ENCODE measurements at regions of chr2 and their contacts with region 1.

Region 1: GRCh38 chr2:240819858-240820606 is at the start of gene KIF1A:
- DNase-seq: peak in 1 of 2 experiments; percentile 84
- H3K4me3 ChIP-seq: peak within 1 kb of the TSS; percentile 69 to 100 (median 80)
- H3K27ac ChIP-seq: peak within 1 kb of the TSS; percentile 67; the same call in 1 of the 2 replicates
- H3K4me1 ChIP-seq: peaks cover 0 to 20% (median 16%) of the 10 kb centered on the region in 4 experiments; a peak in 6 of 7 replicates
- H3K27me3 ChIP-seq: peaks cover 0 to 2% (median 0%) of the 10 kb centered on the region in 4 experiments; a peak in 1 of 7 replicates
- CTCF ChIP-seq: no peak
- EP300 ChIP-seq: no peak
- POLR2A ChIP-seq: peak in 1 of 2 experiments; percentile 74; a peak in 2 of 3 replicates
- RAD21 ChIP-seq: no peak
- total RNA-seq, gene KIF1A: 267 and 281 TPM in 2 replicates

Region 2: GRCh38 chr2:240640939-240641338 is 179.1 kb before region 1 on chr2:
- CTCF ChIA-PET with region 1: no interaction called
- POLR2A ChIA-PET with region 1: no interaction called
- DNase-seq: peak; percentile 49 to 84
- H3K4me3 ChIP-seq: no peak overlapping the region
- H3K27ac ChIP-seq: no peak overlapping the region
- H3K4me1 ChIP-seq: no peaks in the 10 kb centered on the region; a peak in 1 of 7 replicates
- H3K27me3 ChIP-seq: peaks cover 0 to 2% (median 0%) of the 10 kb centered on the region in 4 experiments; a peak in 3 of 7 replicates
- CTCF ChIP-seq: peak; percentile 85 to 95 (median 93)
- EP300 ChIP-seq: no peak
- POLR2A ChIP-seq: no peak
- RAD21 ChIP-seq: peak; percentile 61 to 76

Region 3: DNA sequence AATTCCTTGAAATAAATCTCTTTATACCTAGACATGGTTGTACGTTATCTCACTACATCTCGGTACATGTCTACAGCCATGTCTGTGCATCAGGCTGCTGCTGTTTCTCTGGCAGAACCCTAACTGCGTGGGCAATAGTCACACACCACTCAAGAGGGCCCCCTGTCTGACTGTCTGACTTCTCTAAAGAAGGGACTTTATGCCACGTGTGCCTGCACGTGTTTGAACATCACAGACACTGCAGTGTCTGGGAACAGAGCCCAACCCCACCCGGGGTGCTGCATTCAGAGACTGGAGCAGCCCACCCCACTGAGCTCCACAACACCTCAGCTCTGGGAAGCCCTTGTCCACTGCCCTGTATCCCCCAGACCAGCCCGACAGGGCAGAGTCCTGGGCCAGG is 55.0 kb before region 1 on chr2:
- CTCF ChIA-PET with region 1: no interaction called
- POLR2A ChIA-PET with region 1: interaction called, 10 read pairs
- DNase-seq: no peak
- H3K4me3 ChIP-seq: no peak overlapping the region
- H3K27ac ChIP-seq: no peak overlapping the region
- H3K4me1 ChIP-seq: no peaks in the 10 kb centered on the region
- H3K27me3 ChIP-seq: no peaks in the 10 kb centered on the region
- CTCF ChIP-seq: no peak
- EP300 ChIP-seq: no peak
- POLR2A ChIP-seq: no peak
- RAD21 ChIP-seq: no peak

Region 4: GRCh38 chr2:240791821-240792628 is 28.0 kb before region 1 on chr2:
- CTCF ChIA-PET with region 1: interaction called, 3 read pairs
- POLR2A ChIA-PET with region 1: interaction called, 12 read pairs
- DNase-seq: no peak
- H3K4me3 ChIP-seq: no peak overlapping the region
- H3K27ac ChIP-seq: no peak overlapping the region
- H3K4me1 ChIP-seq: peaks cover 0 to 11% (median 8%) of the 10 kb centered on the region in 4 experiments; a peak in 5 of 7 replicates
- H3K27me3 ChIP-seq: no peaks in the 10 kb centered on the region
- CTCF ChIP-seq: no peak
- EP300 ChIP-seq: no peak
- POLR2A ChIP-seq: no peak
- RAD21 ChIP-seq: no peak

Region 5: DNA sequence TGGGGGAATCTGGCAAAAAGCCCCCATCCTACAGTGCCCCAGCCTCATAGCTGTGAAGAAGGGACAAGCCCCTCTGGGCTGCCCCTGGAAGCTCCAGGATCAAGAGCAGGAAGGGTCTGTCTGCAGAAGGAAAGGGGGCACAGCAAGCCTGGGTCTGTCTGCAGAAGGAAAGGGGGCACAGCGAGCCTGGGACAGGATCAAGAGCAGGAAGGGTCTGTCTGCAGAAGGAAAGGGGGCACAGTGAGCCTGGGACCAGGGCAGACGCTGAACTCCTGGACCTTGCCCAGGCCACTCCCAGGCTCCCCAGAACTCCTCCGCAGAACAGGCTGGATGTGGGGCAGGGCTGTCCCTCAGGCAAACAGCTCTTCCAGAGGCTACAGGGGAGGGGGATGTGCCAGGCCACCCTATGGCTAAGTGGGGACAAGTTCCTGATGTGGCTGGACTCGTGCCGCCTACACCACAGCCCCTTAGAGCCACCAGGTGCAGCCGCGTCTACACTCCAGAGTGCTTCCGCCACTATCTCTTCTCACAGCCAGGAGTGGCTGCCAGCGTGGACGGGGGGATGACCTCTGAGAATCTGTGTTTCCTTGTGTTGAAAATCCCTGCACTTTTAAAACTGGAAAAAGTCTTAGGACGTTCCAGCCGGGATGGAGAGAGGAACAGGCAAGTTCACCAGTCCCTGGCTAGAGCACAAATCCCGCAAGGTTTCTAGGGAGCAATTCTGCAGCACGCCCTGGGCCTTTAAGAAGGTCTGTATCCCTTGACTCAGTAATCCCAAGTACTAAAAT is 20.8 kb before region 1 on chr2:
- CTCF ChIA-PET with region 1: interaction called, 3 read pairs
- POLR2A ChIA-PET with region 1: interaction called, 52 read pairs
- DNase-seq: no peak
- H3K4me3 ChIP-seq: no peak overlapping the region
- H3K27ac ChIP-seq: no peak overlapping the region; the same call in 1 of the 2 replicates
- H3K4me1 ChIP-seq: no peaks in the 10 kb centered on the region; a peak in 1 of 7 replicates
- H3K27me3 ChIP-seq: no peaks in the 10 kb centered on the region
- CTCF ChIP-seq: no peak
- EP300 ChIP-seq: no peak
- POLR2A ChIP-seq: no peak
- RAD21 ChIP-seq: no peak

Region 6: DNA sequence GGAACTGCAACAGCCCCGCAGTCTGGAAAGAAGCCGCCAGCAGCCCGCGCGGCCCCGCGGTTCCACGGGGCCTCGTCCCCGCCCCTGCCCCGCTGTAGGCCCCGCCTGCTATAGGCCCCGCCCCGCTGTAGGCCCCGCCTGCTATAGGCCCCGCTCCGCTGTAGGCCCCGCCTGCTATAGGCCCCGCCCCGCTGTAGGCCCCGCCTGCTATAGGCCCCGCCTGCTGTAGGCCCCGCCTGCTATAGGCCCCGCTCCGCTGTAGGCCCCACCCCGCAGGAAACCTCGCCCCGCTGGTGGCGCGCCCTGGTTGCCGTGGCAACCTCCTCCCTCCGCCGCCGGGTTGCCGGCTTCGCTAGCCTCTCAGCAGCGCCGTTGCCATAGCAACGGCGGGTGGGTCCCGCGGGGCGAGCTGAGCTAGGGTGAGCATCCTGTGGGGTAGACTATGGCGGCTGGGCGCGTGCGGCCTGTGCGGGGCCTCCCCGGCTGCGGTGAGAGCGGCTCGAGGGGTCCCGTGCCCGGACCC is 12.2 kb after region 1 on chr2:
- CTCF ChIA-PET with region 1: interaction called, 4 read pairs
- POLR2A ChIA-PET with region 1: interaction called, 12 read pairs
- DNase-seq: peak; percentile 91 to 98
- H3K4me3 ChIP-seq: peak overlapping the region; percentile 53 to 72 (median 60); a peak in 7 of 8 replicates
- H3K27ac ChIP-seq: no peak overlapping the region
- H3K4me1 ChIP-seq: peaks cover 0 to 2% (median 0%) of the 10 kb centered on the region in 4 experiments; a peak in 1 of 7 replicates
- H3K27me3 ChIP-seq: peaks cover 0 to 17% (median 12%) of the 10 kb centered on the region in 4 experiments; a peak in 5 of 7 replicates
- CTCF ChIP-seq: no peak
- EP300 ChIP-seq: no peak
- POLR2A ChIP-seq: no peak
- RAD21 ChIP-seq: no peak

Region 7: DNA sequence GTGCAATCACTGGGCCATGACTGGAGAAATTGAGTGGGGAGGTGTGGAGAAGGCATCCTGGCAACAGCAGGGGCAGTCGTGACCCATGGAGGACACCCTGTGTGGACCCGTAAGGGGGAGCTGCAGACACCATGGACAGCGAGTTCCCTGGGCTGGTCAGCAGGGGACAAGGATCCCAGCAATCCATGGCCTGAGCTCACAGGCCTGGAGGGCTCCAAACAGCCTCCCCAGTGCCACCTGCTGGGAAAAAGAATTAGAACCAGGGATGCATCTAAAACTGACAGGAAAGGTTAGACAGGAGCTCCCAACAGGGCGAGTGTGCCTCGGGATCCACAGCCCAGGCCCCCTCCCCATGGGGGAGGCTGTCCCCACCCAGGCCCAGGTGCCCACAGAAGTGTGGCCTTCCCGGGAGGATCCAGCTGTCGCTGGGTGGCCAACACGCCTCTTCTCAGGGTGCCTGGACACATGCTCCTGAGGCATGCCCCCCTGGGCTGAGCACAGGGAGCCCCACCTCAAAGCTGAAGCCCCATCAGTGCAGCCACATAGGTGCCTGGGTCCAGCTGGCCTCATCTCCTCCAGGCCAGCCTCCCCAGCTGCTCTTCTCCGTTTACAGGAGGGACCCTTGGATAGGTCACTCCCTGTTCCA is 20.5 kb after region 1 on chr2:
- CTCF ChIA-PET with region 1: interaction called, 12 read pairs
- POLR2A ChIA-PET with region 1: interaction called, 11 read pairs
- DNase-seq: peak; percentile 46 to 62
- H3K4me3 ChIP-seq: no peak overlapping the region
- H3K27ac ChIP-seq: no peak overlapping the region
- H3K4me1 ChIP-seq: peaks cover 0 to 4% (median 0%) of the 10 kb centered on the region in 4 experiments; a peak in 1 of 7 replicates
- H3K27me3 ChIP-seq: no peaks in the 10 kb centered on the region
- CTCF ChIP-seq: peak; percentile 23 to 74 (median 58)
- EP300 ChIP-seq: no peak
- POLR2A ChIP-seq: no peak
- RAD21 ChIP-seq: peak; percentile 55 to 73

Measured in H1 (cell line).